ENCODE measurements at regions of chr17 and their contacts with region 1.

Region 1: GRCh38 chr17:8630802-8631553 is 453 bp upstream of the MYH10 start:
- DNase-seq: peak; percentile 99
- H3K4me3 ChIP-seq: peak overlapping the region; percentile 79 to 94 (median 88)
- H3K27ac ChIP-seq: peak overlapping the region; percentile 70 to 86 (median 82)
- H3K4me1 ChIP-seq: peaks cover 0 to 28% (median 19%) of the 10 kb centered on the region in 4 donors
- H3K27me3 ChIP-seq: no peaks in the 10 kb centered on the region
- CTCF ChIP-seq: peak in 1 of 4 experiments; percentile 12
- EP300 ChIP-seq: no peak
- POLR2A ChIP-seq: no peak

Region 2: DNA sequence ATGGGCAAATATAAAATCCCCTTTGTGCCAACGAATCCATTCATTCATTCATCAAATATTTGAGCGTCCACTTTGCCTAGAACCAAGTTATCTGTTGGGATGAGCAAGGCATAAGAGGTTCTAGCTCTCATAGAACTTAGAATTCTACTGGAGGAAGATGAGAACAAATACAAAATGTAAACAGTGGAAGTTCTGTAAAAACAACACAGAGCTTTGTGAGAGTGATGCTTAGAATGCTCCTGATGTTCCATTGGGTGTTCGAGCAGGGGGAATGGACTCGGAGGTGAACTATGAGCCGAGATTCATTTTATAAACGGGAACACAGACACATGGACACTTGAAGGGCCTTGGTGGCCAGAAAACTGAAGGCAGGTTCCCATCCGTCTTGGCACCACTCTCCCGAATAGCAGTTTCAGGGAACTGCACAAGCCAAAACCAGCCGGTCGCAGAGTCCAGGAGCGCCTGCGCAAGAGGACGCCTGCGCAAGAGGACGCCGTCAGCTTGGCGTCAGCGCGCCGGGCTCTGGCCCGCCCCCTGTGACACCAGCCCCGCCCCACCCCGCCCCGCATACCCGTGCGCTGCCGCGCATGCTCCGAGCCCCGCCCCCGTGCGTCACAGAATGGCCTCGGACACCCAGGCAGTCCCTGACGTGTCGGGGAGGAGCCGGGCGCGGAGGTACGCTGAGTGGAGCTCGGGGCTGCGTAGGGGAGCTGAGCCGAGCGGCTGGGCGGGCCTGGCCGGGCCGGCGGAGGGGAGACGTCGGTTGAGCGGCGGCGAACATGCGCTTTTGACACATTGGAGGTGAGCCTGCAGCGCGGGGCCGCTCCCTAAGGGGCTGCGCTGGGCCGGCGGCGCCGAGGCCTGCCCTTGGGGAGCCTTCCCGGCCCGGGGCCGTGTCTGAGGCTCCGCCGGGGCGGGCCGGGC is 195.5 kb before region 1 on chr17 and contains the start of gene NDEL1:
- intact Hi-C with region 1: loop called (anchors 2 kb)
- DNase-seq: peak; percentile 100
- H3K4me3 ChIP-seq: peak within 1 kb of the TSS; percentile 66 to 99 (median 72)
- H3K27ac ChIP-seq: peak within 1 kb of the TSS; percentile 92 to 100 (median 98)
- H3K4me1 ChIP-seq: peaks cover 0 to 22% (median 17%) of the 10 kb centered on the region in 4 donors
- H3K27me3 ChIP-seq: no peaks in the 10 kb centered on the region
- CTCF ChIP-seq: no peak
- EP300 ChIP-seq: peak in 1 of 4 donors; percentile 53
- POLR2A ChIP-seq: peak; percentile 95 to 96
- total RNA-seq, gene NDEL1: 34.9 to 56.8 (median 49.4) TPM

Region 3: GRCh38 chr17:8552577-8553320 is 78.2 kb before region 1 on chr17:
- intact Hi-C with region 1: no loop called
- DNase-seq: no peak
- H3K4me3 ChIP-seq: no peak overlapping the region
- H3K27ac ChIP-seq: no peak overlapping the region
- H3K4me1 ChIP-seq: no peaks in the 10 kb centered on the region
- H3K27me3 ChIP-seq: no peaks in the 10 kb centered on the region
- CTCF ChIP-seq: no peak
- EP300 ChIP-seq: no peak
- POLR2A ChIP-seq: no peak

Region 4: DNA sequence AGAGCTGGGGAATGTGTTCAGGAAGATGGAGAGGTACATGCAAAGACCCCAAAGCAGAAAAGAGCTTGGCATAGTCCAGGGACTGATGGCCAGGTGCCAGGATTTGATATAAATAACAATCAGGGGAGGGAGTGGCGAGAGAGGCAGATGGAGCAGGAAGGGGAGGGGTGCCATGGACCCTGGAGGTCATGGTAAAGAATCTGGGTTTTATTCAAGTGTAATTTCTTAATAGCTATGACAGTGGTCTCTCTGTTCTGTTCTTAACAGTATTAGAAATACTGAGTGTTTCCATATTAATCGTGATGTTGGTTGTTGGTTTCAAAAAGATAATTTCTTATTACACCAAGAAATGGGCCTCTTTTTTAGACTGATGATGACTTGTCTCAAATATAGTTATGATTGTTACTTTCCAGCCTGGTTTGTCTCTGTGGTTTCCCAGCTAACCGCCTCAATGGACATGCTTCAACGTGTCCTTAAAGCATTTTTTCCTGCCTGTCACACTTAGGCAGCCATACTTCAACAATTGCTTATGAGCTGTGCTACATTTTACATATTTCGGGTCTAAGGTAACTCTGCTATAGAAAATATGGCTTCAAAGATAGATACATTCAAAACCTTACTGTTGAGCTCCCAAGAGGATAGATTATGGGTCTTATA is 49.8 kb before region 1 on chr17:
- intact Hi-C with region 1: no loop called
- DNase-seq: no peak
- H3K4me3 ChIP-seq: no peak overlapping the region
- H3K27ac ChIP-seq: no peak overlapping the region
- H3K4me1 ChIP-seq: no peaks in the 10 kb centered on the region
- H3K27me3 ChIP-seq: no peaks in the 10 kb centered on the region
- CTCF ChIP-seq: no peak
- EP300 ChIP-seq: no peak
- POLR2A ChIP-seq: no peak

Region 5: GRCh38 chr17:8611619-8612298 is 19.2 kb before region 1 on chr17:
- intact Hi-C with region 1: loop called (anchors 2 kb)
- DNase-seq: no peak
- H3K4me3 ChIP-seq: peak overlapping the region; percentile 10 to 40 (median 30)
- H3K27ac ChIP-seq: peak overlapping the region; percentile 59 to 76 (median 66)
- H3K4me1 ChIP-seq: peaks cover 0 to 63% (median 30%) of the 10 kb centered on the region in 4 donors
- H3K27me3 ChIP-seq: no peaks in the 10 kb centered on the region
- CTCF ChIP-seq: no peak
- EP300 ChIP-seq: no peak
- POLR2A ChIP-seq: no peak

Region 6: GRCh38 chr17:9313346-9313745 is 682.4 kb after region 1 on chr17:
- intact Hi-C with region 1: no loop called
- DNase-seq: no peak
- H3K4me3 ChIP-seq: no peak overlapping the region
- H3K27ac ChIP-seq: no peak overlapping the region
- H3K4me1 ChIP-seq: no peaks in the 10 kb centered on the region
- H3K27me3 ChIP-seq: no peaks in the 10 kb centered on the region
- CTCF ChIP-seq: no peak
- EP300 ChIP-seq: no peak
- POLR2A ChIP-seq: no peak